ENCODE measurements at regions of chr3 and their contacts with region 1.

Region 1: GRCh38 chr3:18872466-18872865 is 275.8 kb upstream of the KCNH8 start:
- DNase-seq: no peak
- H3K4me3 Mint-ChIP-seq: no peak overlapping the region
- H3K27ac Mint-ChIP-seq: no peak overlapping the region
- H3K4me1 Mint-ChIP-seq: peaks cover 51% of the 10 kb centered on the region
- H3K27me3 Mint-ChIP-seq: no peaks in the 10 kb centered on the region

Region 2: GRCh38 chr3:18098960-18099587 is 773.4 kb before region 1 on chr3:
- CTCF ChIA-PET with region 1: no interaction called
- intact Hi-C with region 1: loop called (anchors 2 kb)
- DNase-seq: peak; percentile 70
- H3K4me3 Mint-ChIP-seq: no peak overlapping the region
- H3K27ac Mint-ChIP-seq: peak overlapping the region; percentile 59
- H3K4me1 Mint-ChIP-seq: peaks cover 19% of the 10 kb centered on the region
- H3K27me3 Mint-ChIP-seq: no peaks in the 10 kb centered on the region

Region 3: GRCh38 chr3:18559331-18559842 is 313.1 kb before region 1 on chr3:
- CTCF ChIA-PET with region 1: no interaction called
- intact Hi-C with region 1: loop called (anchors 1 kb)
- DNase-seq: peak; percentile 47
- H3K4me3 Mint-ChIP-seq: peak overlapping the region; percentile 39
- H3K27ac Mint-ChIP-seq: peak overlapping the region; percentile 88
- H3K4me1 Mint-ChIP-seq: peaks cover 66% of the 10 kb centered on the region
- H3K27me3 Mint-ChIP-seq: no peaks in the 10 kb centered on the region

Region 4: DNA sequence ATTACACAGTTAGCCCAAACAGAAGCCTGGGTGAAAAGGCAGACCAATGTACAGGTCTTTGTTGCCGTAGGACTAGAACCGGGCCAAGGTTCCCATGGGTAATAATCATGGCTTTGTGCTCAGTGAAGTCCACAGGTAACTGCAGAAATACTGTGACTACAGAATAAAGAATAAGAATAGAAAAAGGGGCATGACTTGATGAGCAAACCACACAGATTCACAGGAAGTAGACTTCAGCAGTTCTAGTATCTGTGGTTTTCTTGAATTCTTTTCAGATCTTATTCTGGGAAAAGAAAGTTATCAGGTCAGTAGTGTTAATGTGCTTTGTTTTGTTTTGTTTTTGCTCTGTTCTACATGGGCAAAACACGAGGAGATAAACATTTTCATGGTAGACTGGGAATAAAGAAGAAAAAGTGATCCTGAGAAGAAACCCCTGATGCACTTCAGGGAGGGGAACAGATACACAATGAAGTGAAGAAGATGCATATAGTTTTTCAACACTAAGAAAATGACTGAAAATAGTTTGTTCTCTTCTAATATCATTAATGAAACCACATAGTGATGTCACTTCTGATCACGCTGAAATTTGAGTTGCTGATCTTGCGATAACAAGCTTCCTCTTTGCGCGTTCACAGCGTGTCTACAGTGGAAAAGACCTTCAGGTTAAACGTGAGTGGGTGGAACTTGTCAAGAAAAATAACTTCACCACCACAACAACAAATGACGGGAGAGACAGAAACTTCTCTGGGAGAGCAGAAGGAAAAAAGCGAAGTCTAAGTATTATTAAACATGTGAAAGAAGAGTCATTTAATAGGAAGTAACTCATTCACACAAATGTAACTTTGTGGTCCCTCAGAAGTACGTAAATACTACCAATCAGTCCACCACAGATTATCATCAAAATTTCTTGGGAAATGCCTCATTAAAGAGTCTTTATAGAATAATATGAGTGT is 131.6 kb before region 1 on chr3:
- CTCF ChIA-PET with region 1: no interaction called
- intact Hi-C with region 1: loop called (anchors 1 kb)
- DNase-seq: peak; percentile 77
- H3K4me3 Mint-ChIP-seq: peak overlapping the region; percentile 63
- H3K27ac Mint-ChIP-seq: peak overlapping the region; percentile 97
- H3K4me1 Mint-ChIP-seq: peaks cover 88% of the 10 kb centered on the region
- H3K27me3 Mint-ChIP-seq: no peaks in the 10 kb centered on the region

Region 5: GRCh38 chr3:18847583-18848197 is 24.8 kb before region 1 on chr3:
- CTCF ChIA-PET with region 1: interaction called, 14 read pairs
- intact Hi-C with region 1: loop called (anchors 1 kb)
- DNase-seq: no peak
- H3K4me3 Mint-ChIP-seq: no peak overlapping the region
- H3K27ac Mint-ChIP-seq: no peak overlapping the region
- H3K4me1 Mint-ChIP-seq: peaks cover 23% of the 10 kb centered on the region
- H3K27me3 Mint-ChIP-seq: no peaks in the 10 kb centered on the region

Region 6: GRCh38 chr3:19030522-19030839 is 158.0 kb after region 1 on chr3:
- CTCF ChIA-PET with region 1: no interaction called
- intact Hi-C with region 1: no loop called
- DNase-seq: peak; percentile 44
- H3K4me3 Mint-ChIP-seq: no peak overlapping the region
- H3K27ac Mint-ChIP-seq: no peak overlapping the region
- H3K4me1 Mint-ChIP-seq: peaks cover 5% of the 10 kb centered on the region
- H3K27me3 Mint-ChIP-seq: peaks cover 4% of the 10 kb centered on the region

Region 7: GRCh38 chr3:20039766-20040475 is 1167.5 kb after region 1 on chr3 and contains the start of gene KAT2B:
- CTCF ChIA-PET with region 1: no interaction called
- intact Hi-C with region 1: loop called (anchors 5 kb)
- DNase-seq: peak; percentile 87
- H3K4me3 Mint-ChIP-seq: peak within 1 kb of the TSS; percentile 95
- H3K27ac Mint-ChIP-seq: peak within 1 kb of the TSS; percentile 92
- H3K4me1 Mint-ChIP-seq: peaks cover 42% of the 10 kb centered on the region
- H3K27me3 Mint-ChIP-seq: no peaks in the 10 kb centered on the region
- total RNA-seq, gene KAT2B: 9.4 to 11.5 TPM

Measured in activated naive CD4-positive, alpha-beta T cell treated with anti-CD3 and anti-CD28 coated beads for 36 hours (primary cell).